Body of pancreas (tissue), 4 donors: ENCODE measurements at regions of chr4 and their contacts with region 1.

Region 1: GRCh38 chr4:98929341-98930267 is 671 bp upstream of the EIF4E start:
- DNase-seq: peak; percentile 61 to 76 (median 70)
- ATAC-seq: peak; percentile 52
- H3K4me3 ChIP-seq: peak overlapping the region; percentile 11 to 100
- H3K27ac ChIP-seq: peak overlapping the region; percentile 87 to 98 (median 94)
- H3K4me1 ChIP-seq: peaks cover 17% of the 10 kb centered on the region
- H3K27me3 ChIP-seq: no peaks in the 10 kb centered on the region
- CTCF ChIP-seq: peak in 4 of 7 experiments; percentile 34 to 56 (median 42)
- POLR2A ChIP-seq: peak; percentile 21 to 90 (median 86)

Region 2: DNA sequence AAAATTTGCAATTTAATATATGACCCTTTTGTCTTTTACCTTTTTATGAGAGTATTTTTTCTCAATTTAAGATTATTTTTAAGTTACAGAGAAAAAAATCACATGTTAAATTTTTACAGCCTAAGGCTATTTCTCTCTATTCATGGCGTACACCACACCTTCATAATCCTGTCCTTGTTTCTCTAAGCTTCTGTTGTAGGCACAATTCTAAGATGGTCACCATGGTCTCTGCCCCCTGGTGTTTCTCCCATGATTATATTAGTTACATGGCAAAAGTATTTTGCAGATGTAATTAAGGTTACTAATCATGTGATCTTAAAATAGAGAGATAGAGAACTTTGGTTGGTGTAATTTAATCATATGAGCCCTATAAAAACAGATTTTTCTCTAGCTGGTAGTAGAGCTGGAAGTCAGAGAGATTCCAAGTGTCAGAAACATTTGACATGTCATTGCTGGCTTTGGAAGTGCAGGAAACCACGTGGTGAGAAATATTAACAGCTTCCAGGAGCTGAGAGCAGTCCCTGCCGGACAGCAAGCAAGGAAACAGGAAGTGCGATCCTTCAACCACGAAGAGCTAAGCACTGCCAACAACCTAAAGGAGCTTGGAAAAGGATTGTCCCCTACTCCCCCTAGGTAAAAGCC is 90.5 kb before region 1 on chr4:
- intact Hi-C with region 1: no loop called
- DNase-seq: peak in 1 of 4 donors; percentile 11
- ATAC-seq: no peak
- H3K4me3 ChIP-seq: no peak overlapping the region
- H3K27ac ChIP-seq: no peak overlapping the region
- H3K4me1 ChIP-seq: no peaks in the 10 kb centered on the region
- H3K27me3 ChIP-seq: no peaks in the 10 kb centered on the region
- CTCF ChIP-seq: no peak
- POLR2A ChIP-seq: no peak

Region 3: DNA sequence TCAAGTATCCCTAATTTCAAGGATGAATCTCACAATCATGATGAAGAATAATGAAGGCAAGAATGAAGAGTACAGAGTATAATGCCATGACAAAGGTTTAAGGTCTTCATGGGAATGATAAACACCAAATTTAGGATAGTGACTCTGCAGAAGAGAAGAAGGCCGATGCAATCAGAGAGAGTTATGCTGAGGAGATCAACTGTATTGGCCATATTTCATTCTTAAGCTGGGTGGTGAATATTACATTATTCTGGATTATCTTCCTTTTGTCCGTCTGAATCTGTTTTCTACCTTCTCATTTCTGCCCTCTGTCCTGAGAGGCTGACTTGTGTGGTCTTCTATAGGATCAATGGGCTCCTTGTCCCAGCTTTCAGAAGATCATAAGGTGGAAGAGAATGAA is 58.1 kb after region 1 on chr4:
- intact Hi-C with region 1: loop called (anchors 10 kb)
- DNase-seq: no peak
- ATAC-seq: no peak
- H3K4me3 ChIP-seq: no peak overlapping the region
- H3K27ac ChIP-seq: no peak overlapping the region
- H3K4me1 ChIP-seq: no peaks in the 10 kb centered on the region
- H3K27me3 ChIP-seq: no peaks in the 10 kb centered on the region
- CTCF ChIP-seq: no peak
- POLR2A ChIP-seq: no peak